ENCODE measurements at regions of chr1 and their contacts with region 1.

Region 1: GRCh38 chr1:169928438-169929209 is 34.9 kb upstream of the SCYL3 start:
- DNase-seq: peak; percentile 43
- ATAC-seq: peak; percentile 78
- H3K4me3 ChIP-seq: no peak overlapping the region
- H3K27ac ChIP-seq: no peak overlapping the region
- H3K4me1 ChIP-seq: no peaks in the 10 kb centered on the region
- H3K27me3 ChIP-seq: no peaks in the 10 kb centered on the region
- CTCF ChIP-seq: peak; percentile 53 to 85 (median 66)
- POLR2A ChIP-seq: no peak
- RAD21 ChIP-seq: peak; percentile 85

Region 2: DNA sequence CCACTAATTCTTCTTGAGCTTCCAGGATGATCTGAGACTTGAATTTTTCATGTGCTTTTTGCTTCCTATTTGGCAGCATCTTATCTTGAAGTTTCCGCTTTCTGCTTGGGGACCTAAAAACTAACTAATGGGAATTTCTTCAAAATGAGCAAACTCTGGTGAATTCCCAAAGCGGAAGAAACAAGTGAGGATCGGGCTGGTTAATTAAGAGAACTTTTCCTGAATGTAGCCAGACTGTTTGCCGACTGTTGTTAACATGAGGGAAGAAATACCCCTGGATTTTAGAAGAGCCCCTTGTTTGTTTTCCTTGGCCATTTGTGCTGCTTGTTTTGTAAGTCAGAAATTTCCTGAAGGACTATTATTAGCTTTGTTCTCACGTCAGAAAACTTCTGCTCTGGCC is 188.6 kb before region 1 on chr1:
- CTCF ChIA-PET with region 1: no interaction called
- POLR2A ChIA-PET with region 1: no interaction called
- RAD21 ChIA-PET with region 1: no interaction called
- intact Hi-C with region 1: no loop called
- DNase-seq: no peak
- ATAC-seq: no peak
- H3K4me3 ChIP-seq: no peak overlapping the region
- H3K27ac ChIP-seq: no peak overlapping the region
- H3K4me1 ChIP-seq: peaks cover 0 to 3% of the 10 kb centered on the region in 2 experiments; a peak in 1 of 4 replicates
- H3K27me3 ChIP-seq: no peaks in the 10 kb centered on the region
- CTCF ChIP-seq: no peak
- POLR2A ChIP-seq: no peak
- RAD21 ChIP-seq: no peak

Region 3: DNA sequence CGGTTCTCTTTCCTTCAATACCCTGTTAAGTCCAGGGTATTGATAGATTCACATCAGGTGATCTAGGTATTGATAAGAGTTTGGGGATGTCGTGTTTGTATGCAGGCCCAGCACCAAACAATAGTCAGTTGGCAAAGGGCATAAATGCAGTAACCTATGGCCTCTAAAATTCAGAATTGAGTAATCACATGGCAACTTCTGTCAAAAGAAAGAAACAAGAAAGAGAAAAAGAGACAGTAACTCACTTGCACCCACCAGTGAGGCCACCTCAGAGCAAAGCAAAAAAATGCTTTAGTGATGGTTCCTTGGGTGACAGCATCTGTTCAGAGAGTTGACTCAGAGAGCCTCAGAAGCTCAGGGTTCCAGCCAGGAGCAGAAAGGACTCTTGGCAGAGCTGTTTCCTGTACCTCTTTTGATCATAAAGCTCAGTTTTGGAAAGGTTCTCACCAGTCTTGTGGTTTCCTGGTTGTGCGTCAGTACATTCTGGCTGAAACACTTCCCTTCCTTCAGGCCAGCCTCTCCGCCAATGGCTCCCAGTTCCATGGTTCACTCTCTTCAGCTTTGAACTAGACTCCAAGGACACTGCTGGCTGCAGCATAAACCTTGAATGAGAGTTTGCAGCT is 533.2 kb after region 1 on chr1:
- CTCF ChIA-PET with region 1: no interaction called
- POLR2A ChIA-PET with region 1: no interaction called
- RAD21 ChIA-PET with region 1: no interaction called
- intact Hi-C with region 1: loop called (anchors 1 kb)
- DNase-seq: no peak
- ATAC-seq: no peak
- H3K4me3 ChIP-seq: no peak overlapping the region
- H3K27ac ChIP-seq: no peak overlapping the region
- H3K4me1 ChIP-seq: no peaks in the 10 kb centered on the region
- H3K27me3 ChIP-seq: no peaks in the 10 kb centered on the region
- CTCF ChIP-seq: no peak
- POLR2A ChIP-seq: no peak
- RAD21 ChIP-seq: no peak

Region 4: DNA sequence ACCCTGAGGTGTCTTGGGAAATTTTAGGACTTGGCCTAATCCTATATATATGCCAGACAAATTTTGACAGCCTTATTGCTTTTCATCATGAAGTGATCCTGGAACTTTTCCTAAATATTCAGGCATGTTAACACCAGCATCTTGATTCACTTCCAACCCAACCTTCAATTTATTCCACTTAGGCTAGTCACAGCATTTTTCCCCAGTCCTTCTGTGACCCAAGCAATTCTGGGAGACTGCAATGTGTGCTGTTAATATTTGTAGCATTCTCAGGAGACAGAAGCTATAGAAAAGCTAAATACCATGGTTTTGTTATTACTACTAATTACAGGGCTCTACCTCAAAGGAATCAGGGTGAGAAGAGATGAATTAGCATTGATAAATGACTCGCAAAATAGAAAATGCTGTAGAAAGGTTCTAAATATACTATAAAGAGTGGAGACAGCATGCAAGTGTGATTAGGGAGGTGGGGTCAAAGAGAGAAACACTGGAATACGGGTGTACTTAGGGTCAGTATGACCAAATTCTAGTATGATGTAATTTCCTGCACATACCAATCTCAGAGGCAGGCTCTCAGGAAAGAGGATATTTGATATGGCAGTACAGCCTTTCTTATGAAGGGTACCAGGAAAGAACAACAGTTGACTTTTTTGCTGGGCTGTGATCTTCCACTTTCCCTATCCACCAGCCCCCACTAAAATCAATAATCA is 764.4 kb after region 1 on chr1:
- CTCF ChIA-PET with region 1: no interaction called
- POLR2A ChIA-PET with region 1: no interaction called
- RAD21 ChIA-PET with region 1: no interaction called
- intact Hi-C with region 1: loop called (anchors 5 kb)
- DNase-seq: no peak
- ATAC-seq: no peak
- H3K4me3 ChIP-seq: no peak overlapping the region
- H3K27ac ChIP-seq: no peak overlapping the region
- H3K4me1 ChIP-seq: no peaks in the 10 kb centered on the region
- H3K27me3 ChIP-seq: no peaks in the 10 kb centered on the region
- CTCF ChIP-seq: no peak
- POLR2A ChIP-seq: no peak
- RAD21 ChIP-seq: no peak

Region 5: GRCh38 chr1:170765712-170766330 is 837.2 kb after region 1 on chr1:
- CTCF ChIA-PET with region 1: no interaction called
- POLR2A ChIA-PET with region 1: no interaction called
- RAD21 ChIA-PET with region 1: no interaction called
- intact Hi-C with region 1: loop called (anchors 2 kb)
- DNase-seq: peak; percentile 21
- ATAC-seq: peak; percentile 73
- H3K4me3 ChIP-seq: no peak overlapping the region
- H3K27ac ChIP-seq: no peak overlapping the region
- H3K4me1 ChIP-seq: no peaks in the 10 kb centered on the region
- H3K27me3 ChIP-seq: no peaks in the 10 kb centered on the region
- CTCF ChIP-seq: peak; percentile 31 to 64 (median 61); a peak in 5 of 6 replicates
- POLR2A ChIP-seq: no peak
- RAD21 ChIP-seq: peak; percentile 79

Region 6: GRCh38 chr1:170881268-170882265 is 952.9 kb after region 1 on chr1:
- CTCF ChIA-PET with region 1: no interaction called
- POLR2A ChIA-PET with region 1: no interaction called
- RAD21 ChIA-PET with region 1: no interaction called
- intact Hi-C with region 1: loop called (anchors 2 kb)
- DNase-seq: peak; percentile 37
- ATAC-seq: peak; percentile 89
- H3K4me3 ChIP-seq: no peak overlapping the region
- H3K27ac ChIP-seq: no peak overlapping the region
- H3K4me1 ChIP-seq: no peaks in the 10 kb centered on the region
- H3K27me3 ChIP-seq: no peaks in the 10 kb centered on the region
- CTCF ChIP-seq: peak; percentile 41 to 90 (median 68)
- POLR2A ChIP-seq: no peak
- RAD21 ChIP-seq: peak; percentile 88

Region 7: DNA sequence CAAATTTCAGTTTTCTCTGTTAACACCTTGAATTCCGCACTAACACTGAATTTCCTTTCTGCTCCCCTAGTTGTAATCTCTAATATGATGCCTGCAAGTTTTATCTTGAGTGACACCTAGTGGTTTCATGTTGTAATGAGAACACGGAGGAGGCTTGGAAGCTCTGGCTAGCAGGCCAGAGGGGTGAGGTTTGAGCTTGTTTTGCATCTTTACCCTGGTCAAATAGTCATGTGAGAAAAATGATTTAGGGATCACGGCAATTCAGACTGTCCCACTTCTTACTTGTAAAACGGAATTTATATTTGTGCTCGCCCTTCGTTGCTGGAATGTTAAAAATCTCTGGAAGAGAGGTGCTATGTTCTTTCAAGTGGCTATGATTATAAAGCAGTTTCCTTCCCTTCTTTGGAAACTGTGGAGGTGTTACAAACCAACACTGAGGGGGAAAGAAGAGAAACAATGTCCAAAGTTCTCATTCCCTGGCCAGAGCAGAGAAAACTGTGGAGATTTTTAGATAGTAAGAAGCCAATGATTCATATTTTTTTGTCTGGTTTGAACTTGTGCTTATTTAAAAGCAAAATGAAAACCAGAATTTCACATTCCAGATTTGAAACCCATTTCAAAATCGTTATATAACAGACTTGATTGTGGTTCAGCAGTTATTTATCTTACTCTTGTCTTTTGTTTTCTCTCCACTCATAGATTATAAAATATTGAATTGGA is 1001.4 kb after region 1 on chr1:
- CTCF ChIA-PET with region 1: interaction called, 5 read pairs
- POLR2A ChIA-PET with region 1: no interaction called
- RAD21 ChIA-PET with region 1: no interaction called
- intact Hi-C with region 1: loop called (anchors 2 kb)
- DNase-seq: peak; percentile 50
- ATAC-seq: peak; percentile 98
- H3K4me3 ChIP-seq: no peak overlapping the region
- H3K27ac ChIP-seq: no peak overlapping the region
- H3K4me1 ChIP-seq: no peaks in the 10 kb centered on the region
- H3K27me3 ChIP-seq: no peaks in the 10 kb centered on the region
- CTCF ChIP-seq: peak; percentile 63 to 73 (median 66); a peak in 5 of 6 replicates
- POLR2A ChIP-seq: no peak
- RAD21 ChIP-seq: peak; percentile 73

Region 8: GRCh38 chr1:171226747-171227370 is 1298.2 kb after region 1 on chr1:
- CTCF ChIA-PET with region 1: no interaction called
- POLR2A ChIA-PET with region 1: no interaction called
- RAD21 ChIA-PET with region 1: no interaction called
- intact Hi-C with region 1: loop called (anchors 5 kb)
- DNase-seq: peak; percentile 42
- ATAC-seq: peak; percentile 96
- H3K4me3 ChIP-seq: no peak overlapping the region
- H3K27ac ChIP-seq: no peak overlapping the region
- H3K4me1 ChIP-seq: no peaks in the 10 kb centered on the region
- H3K27me3 ChIP-seq: no peaks in the 10 kb centered on the region
- CTCF ChIP-seq: peak; percentile 71 to 78 (median 75)
- POLR2A ChIP-seq: no peak
- RAD21 ChIP-seq: peak; percentile 88